ENCODE measurements at regions of chr3 and their contacts with region 1.

Region 1: DNA sequence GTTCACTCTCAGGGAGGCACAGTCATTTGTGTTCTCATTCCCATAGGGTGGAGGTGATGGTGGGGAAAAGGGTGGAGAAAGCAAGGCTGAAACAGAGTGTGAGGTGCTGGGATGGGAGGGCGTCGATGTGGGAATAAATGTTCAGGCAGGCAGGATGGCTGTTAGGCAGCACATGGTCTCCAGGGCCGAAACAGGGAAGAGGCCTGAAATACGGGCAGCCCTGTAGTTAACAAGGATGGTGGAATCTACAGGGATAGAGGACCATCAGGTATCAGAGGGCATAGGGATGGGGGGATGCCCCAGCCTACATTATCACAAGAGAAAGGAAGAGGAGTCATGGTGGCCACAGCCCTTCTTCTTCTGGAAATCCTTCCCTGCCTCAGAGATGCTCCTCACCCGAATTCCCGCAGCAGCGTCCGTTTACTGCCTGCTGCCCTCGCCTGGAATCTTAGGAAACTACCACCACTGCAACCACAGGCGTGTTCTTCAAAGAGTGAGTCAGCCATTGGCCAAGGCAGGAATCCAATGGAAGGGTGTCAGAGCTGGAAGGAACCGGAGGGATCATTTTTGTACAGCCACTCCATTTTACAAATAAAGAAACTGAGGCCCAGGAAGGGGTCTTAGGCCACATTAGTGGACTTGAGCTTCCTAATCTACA is 49.7 kb upstream of the POMGNT2 start:
- DNase-seq: peak; percentile 67 to 77
- ATAC-seq: peak; percentile 63 to 84 (median 78)
- H3K4me3 ChIP-seq: no peak overlapping the region
- H3K27ac ChIP-seq: no peak overlapping the region
- H3K4me1 ChIP-seq: peaks cover 6% of the 10 kb centered on the region
- H3K27me3 ChIP-seq: peaks cover 0 to 4% (median 0%) of the 10 kb centered on the region in 3 donors
- CTCF ChIP-seq: peak; percentile 45

Region 2: DNA sequence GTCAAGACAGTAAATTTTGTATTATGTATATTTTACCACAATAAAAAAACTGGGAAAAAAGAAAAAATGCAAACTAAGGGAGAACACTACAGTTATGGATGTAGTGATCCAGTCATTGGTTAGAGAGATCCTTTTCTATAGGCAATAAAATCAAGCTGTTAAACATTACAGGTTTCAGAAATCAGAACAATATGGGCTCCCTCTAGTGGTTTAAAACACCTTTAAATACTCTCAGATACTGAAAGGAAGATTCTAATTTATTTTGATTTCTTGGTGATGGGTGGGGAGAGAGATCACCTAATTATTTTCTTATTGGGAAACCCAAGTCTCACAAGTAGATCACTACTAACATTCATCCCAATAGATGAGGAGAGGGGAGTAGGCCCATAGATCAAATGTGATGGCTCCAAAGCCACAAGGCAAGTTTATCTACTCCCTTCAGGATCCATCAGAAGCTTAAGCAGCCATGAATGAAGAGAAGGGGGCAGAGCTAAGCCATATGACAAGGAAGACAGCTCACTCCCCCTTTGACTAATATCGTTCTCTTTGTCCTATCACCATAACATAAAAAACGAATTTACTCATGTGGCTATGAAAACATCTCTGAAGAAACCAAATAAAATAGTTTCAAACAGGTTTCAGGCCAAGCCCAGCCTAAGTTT is 347.6 kb after region 1 on chr3:
- intact Hi-C with region 1: loop called in 1 of 2 experiments (anchors 5 kb)
- DNase-seq: no peak
- ATAC-seq: peak in 1 of 4 donors; percentile 74
- H3K4me3 ChIP-seq: no peak overlapping the region
- H3K27ac ChIP-seq: no peak overlapping the region
- H3K4me1 ChIP-seq: no peaks in the 10 kb centered on the region
- H3K27me3 ChIP-seq: no peaks in the 10 kb centered on the region
- CTCF ChIP-seq: peak; percentile 56

Measured in psoas muscle (tissue), 8 donors.